ENCODE measurements at regions of chr3 and their contacts with region 1.

Region 1: GRCh38 chr3:134985864-134986715 is 191.0 kb downstream of the EPHB1 start:
- DNase-seq: peak in 1 of 42 donors; percentile 18

Region 2: DNA sequence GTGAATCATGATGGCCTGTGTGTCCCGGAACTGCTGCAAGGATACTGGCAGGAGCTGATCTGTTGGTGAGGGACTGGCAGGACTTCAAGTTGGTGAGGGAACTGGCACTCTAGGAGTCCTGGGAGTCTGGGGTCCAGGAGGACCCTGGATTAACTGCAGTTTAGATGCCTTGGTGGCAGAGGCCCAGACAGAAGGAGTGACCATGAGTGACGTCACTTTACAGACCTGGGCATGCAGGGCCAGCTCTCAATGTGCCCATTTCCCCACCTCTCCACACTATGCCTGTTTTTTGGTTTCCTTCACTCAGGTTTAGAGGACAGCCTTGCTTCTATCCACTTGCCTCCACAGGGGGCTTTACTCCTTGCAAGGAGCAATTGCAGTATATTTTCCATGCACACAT is 36.9 kb before region 1 on chr3:
- intact Hi-C with region 1: no loop called
- DNase-seq: no peak

Region 3: DNA sequence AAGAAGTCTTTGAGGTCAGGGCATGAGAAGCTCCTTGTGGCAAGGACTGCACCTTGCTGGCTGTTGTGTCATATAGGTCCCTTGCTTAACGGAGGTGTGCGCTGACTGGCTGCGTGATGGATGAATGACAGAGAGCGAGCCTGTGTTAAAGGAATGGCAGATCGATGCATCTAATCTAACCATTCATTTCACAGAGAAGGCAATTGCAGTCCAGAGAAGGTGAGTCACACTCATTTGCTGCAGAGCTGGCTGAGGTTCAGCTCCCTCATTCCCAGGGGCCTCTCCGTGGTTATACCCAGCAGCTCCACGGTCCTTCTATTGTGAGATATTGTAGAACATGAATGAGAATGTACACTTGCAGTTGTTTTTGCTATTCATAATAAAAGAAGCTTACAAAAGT is 98.3 kb after region 1 on chr3:
- intact Hi-C with region 1: loop called (anchors 10 kb)
- DNase-seq: peak in 6 of 42 donors; percentile 22 to 52 (median 40)